ENCODE measurements at regions of chr5 and their contacts with region 1.

Region 1: GRCh38 chr5:10689391-10690081 is 71.5 kb downstream of the DAP start:
- DNase-seq: no peak
- CTCF ChIP-seq: peak; percentile 26

Region 2: GRCh38 chr5:10485142-10485795 is 204.3 kb before region 1 on chr5:
- CTCF ChIA-PET with region 1: no interaction called
- POLR2A ChIA-PET with region 1: no interaction called
- DNase-seq: no peak
- CTCF ChIP-seq: no peak

Region 3: DNA sequence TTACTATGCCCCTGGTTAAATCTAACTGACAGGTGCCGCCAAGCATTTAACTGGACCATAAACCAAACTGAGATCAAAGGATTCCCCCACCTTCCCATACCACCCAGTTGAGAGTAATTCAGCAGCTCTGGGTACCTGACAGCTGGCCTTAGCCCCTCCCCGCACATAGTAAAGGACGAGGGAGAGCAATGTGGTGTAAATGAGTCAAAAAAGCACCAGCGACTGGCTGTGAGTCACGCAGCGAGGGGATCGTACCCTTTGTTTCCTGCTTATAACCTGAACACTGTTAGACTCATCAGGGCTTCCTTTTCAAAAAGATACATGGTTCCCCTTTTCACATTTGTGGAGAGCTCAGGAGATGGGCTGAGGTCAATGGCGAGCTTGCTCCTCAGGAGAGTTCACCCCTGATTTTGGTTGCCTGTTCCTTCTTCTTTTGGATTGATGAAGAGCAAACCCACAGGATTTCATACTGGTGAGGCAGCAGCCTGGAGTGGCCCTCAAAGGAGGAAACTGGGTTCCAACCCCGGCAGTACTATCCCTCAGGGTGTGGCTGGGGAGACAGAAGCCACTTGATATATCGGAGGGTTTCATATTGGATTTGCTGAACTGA is 54.2 kb before region 1 on chr5:
- CTCF ChIA-PET with region 1: interaction called, 20 read pairs
- POLR2A ChIA-PET with region 1: interaction called, 16 read pairs
- DNase-seq: peak; percentile 85
- CTCF ChIP-seq: no peak

Region 4: DNA sequence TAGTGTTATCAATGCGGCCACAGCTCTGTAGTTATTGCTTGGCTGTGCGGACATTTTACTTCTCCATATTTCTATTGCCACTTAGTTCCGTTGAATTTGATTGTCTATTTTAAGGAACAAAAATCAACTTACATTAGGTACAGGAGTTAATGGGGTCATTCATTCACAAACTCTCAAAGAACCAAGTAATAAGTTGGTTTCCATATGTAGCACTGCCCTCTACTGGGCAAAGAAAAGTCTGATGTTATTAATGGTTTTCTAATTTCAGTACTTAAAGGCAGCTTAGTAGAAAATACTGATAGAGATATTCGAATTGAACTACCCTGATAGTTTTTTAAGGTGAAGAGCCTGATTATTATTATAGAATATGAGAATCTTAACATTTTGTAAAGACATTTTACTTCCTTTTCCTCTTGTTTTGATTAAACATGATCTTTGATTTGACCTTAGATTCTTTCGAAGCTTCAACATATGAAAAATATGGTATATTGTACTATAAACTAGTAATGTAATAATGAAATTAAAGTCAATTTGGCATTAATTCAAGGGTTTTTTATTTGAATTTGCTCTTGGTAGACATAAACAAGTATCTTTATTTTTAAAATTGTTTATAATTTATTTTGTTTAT is 1334.2 kb after region 1 on chr5:
- CTCF ChIA-PET with region 1: no interaction called
- POLR2A ChIA-PET with region 1: no interaction called
- DNase-seq: peak; percentile 11
- CTCF ChIP-seq: peak; percentile 46

Measured in GM10248 (cell line).